CD4-positive, alpha-beta memory T cell (primary cell): ENCODE measurements at regions of chr13 and their contacts with region 1.

Region 1: GRCh38 chr13:77310579-77311279 is 16.2 kb downstream of the MYCBP2 start:
- DNase-seq: no peak
- H3K4me3 ChIP-seq: no peak overlapping the region
- H3K4me3 Mint-ChIP-seq: peak overlapping the region in 6 of 8 donors; percentile 26 to 73 (median 53)
- H3K27ac ChIP-seq: no peak overlapping the region
- H3K27ac Mint-ChIP-seq: peak overlapping the region in 4 of 7 donors; percentile 9 to 64 (median 38)
- H3K4me1 ChIP-seq: peaks cover 94% of the 10 kb centered on the region
- H3K4me1 Mint-ChIP-seq: peaks cover 75 to 92% (median 86%) of the 10 kb centered on the region in 4 donors
- H3K27me3 ChIP-seq: no peaks in the 10 kb centered on the region
- H3K27me3 Mint-ChIP-seq: no peaks in the 10 kb centered on the region

Region 2: DNA sequence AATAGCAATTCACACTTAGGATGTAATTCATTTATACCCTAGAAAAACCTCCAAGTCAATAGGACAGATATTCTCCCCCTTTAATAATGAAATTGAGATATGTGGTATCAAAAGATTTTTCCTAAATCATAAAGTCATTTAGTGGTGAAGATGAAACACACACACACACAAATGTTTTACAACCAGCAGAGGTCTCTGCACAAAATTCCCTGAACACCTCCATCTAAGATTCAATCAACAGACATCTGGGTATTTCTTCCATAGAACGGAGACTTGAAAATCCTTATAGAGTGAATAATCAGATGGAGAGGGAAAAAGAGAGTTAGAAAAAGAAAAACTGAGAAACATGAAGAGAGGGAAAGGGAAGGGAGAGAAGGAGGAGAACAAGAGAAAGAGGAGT is 36.6 kb before region 1 on chr13:
- CTCF ChIA-PET with region 1: no interaction called
- POLR2A ChIA-PET with region 1: no interaction called
- intact Hi-C with region 1: loop called (anchors 5 kb)
- DNase-seq: no peak
- H3K4me3 ChIP-seq: no peak overlapping the region
- H3K4me3 Mint-ChIP-seq: no peak overlapping the region
- H3K27ac ChIP-seq: no peak overlapping the region
- H3K27ac Mint-ChIP-seq: peak overlapping the region in 1 of 7 donors; percentile 4
- H3K4me1 ChIP-seq: no peaks in the 10 kb centered on the region
- H3K4me1 Mint-ChIP-seq: peaks cover 0 to 23% (median 8%) of the 10 kb centered on the region in 4 donors
- H3K27me3 ChIP-seq: no peaks in the 10 kb centered on the region
- H3K27me3 Mint-ChIP-seq: no peaks in the 10 kb centered on the region

Region 3: GRCh38 chr13:77290342-77290741 is 20.4 kb before region 1 on chr13:
- CTCF ChIA-PET with region 1: no interaction called
- POLR2A ChIA-PET with region 1: no interaction called
- intact Hi-C with region 1: no loop called
- DNase-seq: no peak
- H3K4me3 ChIP-seq: no peak overlapping the region
- H3K4me3 Mint-ChIP-seq: no peak overlapping the region
- H3K27ac ChIP-seq: no peak overlapping the region
- H3K27ac Mint-ChIP-seq: peak overlapping the region in 3 of 7 donors; percentile 3 to 60 (median 36)
- H3K4me1 ChIP-seq: peaks cover 11% of the 10 kb centered on the region
- H3K4me1 Mint-ChIP-seq: peaks cover 23 to 45% (median 43%) of the 10 kb centered on the region in 4 donors
- H3K27me3 ChIP-seq: no peaks in the 10 kb centered on the region
- H3K27me3 Mint-ChIP-seq: no peaks in the 10 kb centered on the region

Region 4: DNA sequence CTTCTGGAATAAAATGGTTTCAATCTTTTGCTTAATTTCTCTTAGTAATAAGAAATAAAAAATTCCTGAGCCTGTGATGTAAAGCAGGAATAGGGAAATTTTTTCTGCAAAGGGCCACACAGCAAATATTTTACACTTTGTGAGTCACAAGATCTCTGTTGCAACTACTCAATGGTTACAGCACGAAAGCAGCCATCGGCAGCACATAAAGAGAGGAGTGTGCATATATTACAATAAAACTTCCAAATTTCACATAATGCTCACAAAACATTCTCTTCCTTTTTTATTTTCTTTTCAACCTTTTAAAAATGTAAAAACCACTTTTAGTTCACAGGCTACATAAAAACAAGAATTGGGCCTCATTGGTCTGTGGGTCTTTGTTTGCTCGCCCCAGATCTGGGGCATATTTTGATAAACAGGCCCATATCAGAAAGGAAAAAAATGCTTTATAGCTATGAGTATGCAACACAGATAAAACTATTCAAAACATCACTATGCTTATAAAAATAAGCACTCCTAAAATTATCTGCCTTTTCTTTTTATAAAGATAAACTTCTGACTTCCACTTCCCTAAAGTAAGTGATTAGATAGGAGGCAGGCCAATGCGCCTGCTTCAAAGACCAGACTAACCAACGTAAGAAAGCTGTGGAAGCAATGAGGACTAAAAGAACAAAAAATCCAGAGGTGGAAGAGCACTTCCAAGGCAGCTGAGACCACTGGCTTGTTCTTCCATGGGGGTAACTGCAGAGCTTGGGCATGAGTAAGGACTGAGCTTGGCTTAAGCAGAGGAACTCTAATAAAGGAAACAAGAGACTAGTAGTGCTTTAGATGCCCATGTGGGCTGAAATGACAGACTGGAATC is 10.3 kb before region 1 on chr13:
- CTCF ChIA-PET with region 1: interaction called, 3 read pairs
- POLR2A ChIA-PET with region 1: no interaction called
- intact Hi-C with region 1: loop called (anchors 1 kb)
- DNase-seq: no peak
- H3K4me3 ChIP-seq: no peak overlapping the region
- H3K4me3 Mint-ChIP-seq: peak overlapping the region in 4 of 8 donors; percentile 9 to 55 (median 34)
- H3K27ac ChIP-seq: no peak overlapping the region
- H3K27ac Mint-ChIP-seq: peak overlapping the region in 1 of 7 donors; percentile 58
- H3K4me1 ChIP-seq: peaks cover 60% of the 10 kb centered on the region
- H3K4me1 Mint-ChIP-seq: peaks cover 52 to 79% (median 59%) of the 10 kb centered on the region in 4 donors
- H3K27me3 ChIP-seq: no peaks in the 10 kb centered on the region
- H3K27me3 Mint-ChIP-seq: no peaks in the 10 kb centered on the region